Right ventricle myocardium inferior (tissue), 1 donor: ENCODE measurements at regions of chr2 and their contacts with region 1.

Region 1: GRCh38 chr2:219402665-219403515 is 15.2 kb upstream of the DNPEP start:
- DNase-seq: no peak
- ATAC-seq: no peak

Region 2: DNA sequence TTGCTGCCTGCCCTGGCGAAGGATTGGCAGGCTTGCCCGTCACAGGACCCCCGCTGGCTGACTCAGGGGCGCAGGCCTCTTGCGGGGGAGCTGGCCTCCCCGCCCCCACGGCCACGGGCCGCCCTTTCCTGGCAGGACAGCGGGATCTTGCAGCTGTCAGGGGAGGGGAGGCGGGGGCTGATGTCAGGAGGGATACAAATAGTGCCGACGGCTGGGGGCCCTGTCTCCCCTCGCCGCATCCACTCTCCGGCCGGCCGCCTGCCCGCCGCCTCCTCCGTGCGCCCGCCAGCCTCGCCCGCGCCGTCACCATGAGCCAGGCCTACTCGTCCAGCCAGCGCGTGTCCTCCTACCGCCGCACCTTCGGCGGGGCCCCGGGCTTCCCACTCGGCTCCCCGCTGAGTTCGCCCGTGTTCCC is 15.3 kb after region 1 on chr2 and contains the start of gene DES:
- intact Hi-C with region 1: loop called (anchors 1 kb)
- DNase-seq: peak; percentile 81
- ATAC-seq: peak; percentile 63
- total RNA-seq, gene DES: 13,356 TPM

Region 3: DNA sequence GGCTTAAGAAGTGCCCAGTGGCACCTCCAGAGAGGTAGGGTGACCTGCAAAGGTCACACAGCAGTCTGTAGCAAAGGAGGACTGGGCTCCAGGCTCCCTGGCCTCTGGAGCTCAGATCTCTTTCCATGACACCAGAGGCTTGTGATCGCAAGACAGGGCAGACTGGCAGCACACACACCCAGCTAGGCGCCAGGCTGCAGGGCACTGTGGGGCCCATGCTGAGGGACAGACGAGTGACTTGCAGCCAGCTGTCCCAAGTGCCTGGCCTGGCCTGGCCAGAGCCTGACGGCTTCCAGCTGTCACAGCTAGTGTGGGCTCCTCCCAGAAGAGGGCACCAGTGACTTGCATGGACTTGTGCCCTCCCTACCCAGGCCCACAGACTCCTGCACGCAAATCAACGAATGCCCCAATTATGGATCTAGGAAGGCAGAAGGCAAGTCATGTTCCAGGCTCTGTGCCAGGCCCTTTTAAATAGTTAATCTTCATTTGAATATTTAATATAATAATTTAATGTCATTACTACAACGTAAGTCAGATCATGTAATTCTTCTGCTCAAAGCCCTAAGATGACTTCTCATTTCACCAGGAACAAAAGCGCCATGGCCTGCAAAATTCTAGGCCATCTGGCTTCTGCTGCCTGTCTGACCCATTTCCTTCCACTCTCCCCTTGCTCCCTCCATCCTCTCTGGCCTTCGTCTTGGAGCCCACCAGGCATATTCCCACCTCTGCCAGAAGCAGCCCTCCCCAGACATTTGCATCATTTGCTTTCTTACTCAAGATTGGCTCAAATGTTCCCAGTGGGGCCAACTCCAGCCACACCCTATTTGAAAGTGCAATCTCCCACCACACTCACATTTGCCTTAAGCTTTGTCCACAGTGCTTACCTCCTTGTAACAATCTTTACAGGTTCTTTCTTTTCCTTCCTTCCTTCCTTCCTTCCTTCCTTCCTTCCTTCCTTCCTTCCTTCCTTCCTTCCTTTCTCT is 28.0 kb after region 1 on chr2:
- intact Hi-C with region 1: loop called (anchors 1 kb)
- DNase-seq: no peak
- ATAC-seq: peak; percentile 80

Region 4: GRCh38 chr2:219459460-219460311 is 56.8 kb after region 1 on chr2:
- intact Hi-C with region 1: loop called (anchors 5 kb)
- DNase-seq: peak; percentile 76
- ATAC-seq: peak; percentile 62

Region 5: GRCh38 chr2:219475697-219476651 is 73.1 kb after region 1 on chr2:
- intact Hi-C with region 1: loop called (anchors 5 kb)
- DNase-seq: peak; percentile 80
- ATAC-seq: peak; percentile 56

Region 6: DNA sequence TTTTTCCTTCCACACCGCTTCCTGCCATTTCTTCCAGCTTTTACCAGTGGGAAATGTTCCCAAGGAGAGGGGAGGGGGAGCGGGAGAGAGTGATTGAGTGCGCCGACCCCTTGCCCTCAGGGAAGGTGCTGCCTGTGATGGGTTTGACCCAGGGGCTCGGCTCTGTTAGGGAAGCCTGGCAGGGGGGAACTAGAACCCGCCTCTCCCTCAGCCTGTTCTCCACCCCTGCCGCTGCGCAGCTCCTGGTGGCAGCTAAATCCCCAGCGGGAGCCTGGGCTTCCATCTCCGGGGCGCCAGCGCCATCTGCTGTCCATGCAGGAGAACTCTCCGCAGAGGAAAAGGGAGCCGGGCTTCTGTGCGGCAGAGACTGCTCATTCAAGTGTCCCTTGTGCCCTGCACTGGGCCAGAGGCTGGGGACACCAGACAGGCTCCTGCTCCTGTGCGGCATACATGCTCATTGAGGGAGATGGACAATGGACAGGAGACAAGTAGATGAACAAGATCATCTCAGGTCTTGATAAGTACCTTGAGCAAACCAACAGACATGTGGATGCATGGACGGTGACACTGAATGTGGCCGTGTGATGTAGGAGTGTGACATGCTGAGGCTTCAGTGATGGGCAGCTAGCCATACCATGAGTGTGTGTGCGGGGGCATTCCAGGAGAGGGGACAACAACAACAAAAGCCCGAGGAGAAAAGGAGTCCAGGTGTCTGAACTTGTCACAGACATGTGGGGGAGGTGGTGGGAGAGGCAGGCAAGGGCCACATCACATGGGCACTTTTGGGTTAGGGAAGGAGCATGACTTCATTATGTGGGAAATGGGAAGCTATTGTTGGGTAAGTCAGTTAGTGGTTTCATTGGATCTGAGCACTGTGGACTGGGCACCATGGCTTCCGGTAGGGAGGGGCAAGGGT is 127.4 kb after region 1 on chr2:
- intact Hi-C with region 1: loop called (anchors 1 kb)
- DNase-seq: peak; percentile 93
- ATAC-seq: peak; percentile 85